Heart right ventricle (tissue), 16 donors: ENCODE measurements at regions of chr15 and their contacts with region 1.

Region 1: DNA sequence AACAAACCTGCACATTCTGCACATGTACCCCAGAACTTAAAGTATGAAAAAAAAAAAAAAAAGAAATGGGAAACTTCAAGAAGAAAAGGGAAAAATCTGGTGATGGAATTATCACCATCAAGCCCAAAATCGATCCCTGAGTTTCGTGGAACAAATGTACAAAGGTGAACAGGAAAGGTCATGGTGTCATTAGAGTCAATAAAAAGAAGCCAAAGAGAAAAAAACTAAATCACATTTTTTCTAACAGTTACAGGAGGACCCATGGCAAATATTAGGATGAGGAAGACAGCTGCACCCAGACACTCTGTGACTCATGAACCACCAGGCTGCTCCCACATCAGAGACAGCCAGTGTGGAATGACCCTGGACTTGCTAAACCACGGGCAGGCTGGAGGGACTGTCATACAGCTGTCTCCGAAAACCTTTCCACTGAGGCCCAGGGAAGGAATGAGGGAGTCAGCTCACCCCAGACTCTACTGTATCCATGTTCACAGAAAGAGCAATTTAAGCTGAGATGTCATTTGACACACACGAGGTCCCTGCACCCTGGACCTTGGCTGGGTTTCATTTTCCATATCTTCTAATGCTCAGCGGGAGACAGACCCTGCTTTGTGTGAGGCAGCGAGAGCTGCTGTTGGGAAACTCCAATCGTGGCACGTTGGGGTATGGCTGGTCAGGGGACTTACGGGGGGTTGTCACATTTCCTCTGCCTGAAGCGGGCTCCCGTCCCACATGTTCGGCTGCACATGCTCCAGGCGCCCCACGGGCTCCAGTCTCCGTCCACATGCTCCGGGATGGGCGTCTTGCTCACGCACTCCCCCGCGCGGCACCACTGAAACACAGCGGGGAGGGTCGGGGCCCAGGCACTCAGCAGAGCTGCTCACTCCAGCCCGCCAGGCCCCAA is 210.2 kb downstream of the ADAMTS17 start:
- DNase-seq: peak; percentile 69 to 77
- ATAC-seq: peak; percentile 87 to 97 (median 91)
- H3K4me3 ChIP-seq: peak overlapping the region in 9 of 10 donors; percentile 15 to 47 (median 26)
- H3K27ac ChIP-seq: peak overlapping the region in 8 of 10 donors; percentile 9 to 55 (median 45)
- H3K4me1 ChIP-seq: peaks cover 0 to 11% (median 0%) of the 10 kb centered on the region in 9 donors
- H3K27me3 ChIP-seq: no peaks in the 10 kb centered on the region
- CTCF ChIP-seq: peak; percentile 27 to 76 (median 61)

Region 2: GRCh38 chr15:100078511-100079220 is 52.9 kb before region 1 on chr15:
- intact Hi-C with region 1: loop called in 1 of 10 experiments (anchors 10 kb)
- DNase-seq: no peak
- ATAC-seq: no peak
- H3K4me3 ChIP-seq: no peak overlapping the region
- H3K27ac ChIP-seq: no peak overlapping the region
- H3K4me1 ChIP-seq: peaks cover 0 to 17% (median 0%) of the 10 kb centered on the region in 9 donors
- H3K27me3 ChIP-seq: no peaks in the 10 kb centered on the region
- CTCF ChIP-seq: no peak

Region 3: GRCh38 chr15:100241572-100242482 is 110.3 kb after region 1 on chr15:
- intact Hi-C with region 1: no loop called
- DNase-seq: no peak
- ATAC-seq: peak in 4 of 8 donors; percentile 27 to 86 (median 52)
- H3K4me3 ChIP-seq: no peak overlapping the region
- H3K27ac ChIP-seq: no peak overlapping the region
- H3K4me1 ChIP-seq: peaks cover 0 to 16% (median 0%) of the 10 kb centered on the region in 9 donors
- H3K27me3 ChIP-seq: no peaks in the 10 kb centered on the region
- CTCF ChIP-seq: no peak

Region 4: GRCh38 chr15:100500226-100500990 is 368.8 kb after region 1 on chr15:
- intact Hi-C with region 1: no loop called
- DNase-seq: no peak
- ATAC-seq: no peak
- H3K4me3 ChIP-seq: no peak overlapping the region
- H3K27ac ChIP-seq: no peak overlapping the region
- H3K4me1 ChIP-seq: no peaks in the 10 kb centered on the region
- H3K27me3 ChIP-seq: peaks cover 0 to 26% (median 5%) of the 10 kb centered on the region in 7 donors
- CTCF ChIP-seq: no peak